PC-3 (cell line): ENCODE measurements at regions of chr2 and their contacts with region 1.

Region 1: DNA sequence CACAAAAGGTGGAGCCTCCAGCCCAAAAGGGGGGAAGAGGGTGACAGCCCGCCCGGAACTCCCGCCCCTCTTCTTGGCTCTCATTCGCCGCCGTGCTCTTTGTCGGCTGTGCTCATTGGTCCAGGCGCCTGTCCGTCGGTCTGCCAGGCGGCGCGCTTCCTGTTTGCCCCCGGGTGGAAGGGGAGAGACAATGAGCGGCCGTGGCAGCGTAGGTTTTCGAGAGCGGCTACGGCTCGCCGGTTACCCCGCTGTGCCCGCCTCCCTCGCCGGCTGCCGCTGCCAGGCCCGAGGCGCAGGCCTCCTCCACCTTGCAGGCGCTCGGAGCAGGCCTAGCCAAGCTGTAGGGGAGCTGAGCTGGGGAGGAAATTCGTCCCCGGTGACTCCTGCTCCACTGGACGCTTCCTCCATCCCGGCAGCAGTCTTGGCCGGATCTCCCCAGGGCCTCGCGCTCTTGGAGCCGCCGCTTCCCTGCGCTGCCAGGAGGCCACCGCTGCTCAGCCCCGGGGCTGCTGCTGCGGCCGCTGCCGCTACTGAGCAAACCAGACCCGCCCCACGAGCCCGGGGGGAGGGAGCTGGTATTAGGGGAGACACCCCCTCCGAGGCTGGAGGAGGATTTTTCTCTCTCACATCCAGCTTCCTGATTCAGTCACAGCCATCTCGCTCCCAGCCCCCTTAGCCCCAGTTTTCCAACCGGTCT is at the start of gene SP3:
- DNase-seq: peak; percentile 96
- ATAC-seq: peak; percentile 74
- H3K4me3 ChIP-seq: peak within 1 kb of the TSS; percentile 82
- H3K27ac ChIP-seq: peak within 1 kb of the TSS; percentile 95
- H3K4me1 ChIP-seq: peaks cover 25% of the 10 kb centered on the region
- H3K27me3 ChIP-seq: no peaks in the 10 kb centered on the region
- CTCF ChIP-seq: no peak
- total RNA-seq, gene SP3: 82.2 and 117 TPM in 2 replicates

Region 2: DNA sequence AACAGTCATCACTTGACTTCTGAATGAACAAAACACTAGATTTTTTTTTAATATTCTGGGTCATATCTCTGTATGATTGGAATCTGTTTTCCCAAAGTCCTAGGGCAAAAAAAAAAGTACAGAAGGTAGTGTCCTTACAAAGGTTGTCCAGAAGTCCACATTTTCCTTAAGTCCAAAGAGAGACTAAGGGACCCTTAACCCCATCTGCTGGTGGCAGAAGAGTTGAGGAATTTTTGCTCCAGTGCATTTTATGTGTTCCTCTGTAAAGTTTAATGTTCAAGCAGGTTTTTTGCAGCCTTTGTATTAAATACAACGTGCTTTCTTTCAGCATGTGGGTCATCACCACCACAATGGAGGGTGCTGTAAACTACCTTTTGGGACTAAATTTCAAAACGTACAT is 216.2 kb before region 1 on chr2:
- CTCF ChIA-PET with region 1: no interaction called
- POLR2A ChIA-PET with region 1: no interaction called
- intact Hi-C with region 1: loop called (anchors 5 kb)
- DNase-seq: peak; percentile 74
- ATAC-seq: peak; percentile 64
- H3K4me3 ChIP-seq: no peak overlapping the region
- H3K27ac ChIP-seq: no peak overlapping the region
- H3K4me1 ChIP-seq: no peaks in the 10 kb centered on the region
- H3K27me3 ChIP-seq: no peaks in the 10 kb centered on the region
- CTCF ChIP-seq: peak; percentile 74

Region 3: GRCh38 chr2:173909846-173910245 is 55.6 kb before region 1 on chr2:
- CTCF ChIA-PET with region 1: no interaction called
- POLR2A ChIA-PET with region 1: no interaction called
- intact Hi-C with region 1: loop called (anchors 2 kb)
- DNase-seq: peak; percentile 44
- ATAC-seq: peak; percentile 31
- H3K4me3 ChIP-seq: no peak overlapping the region
- H3K27ac ChIP-seq: no peak overlapping the region
- H3K4me1 ChIP-seq: peaks cover 14% of the 10 kb centered on the region
- H3K27me3 ChIP-seq: no peaks in the 10 kb centered on the region
- CTCF ChIP-seq: no peak

Region 4: DNA sequence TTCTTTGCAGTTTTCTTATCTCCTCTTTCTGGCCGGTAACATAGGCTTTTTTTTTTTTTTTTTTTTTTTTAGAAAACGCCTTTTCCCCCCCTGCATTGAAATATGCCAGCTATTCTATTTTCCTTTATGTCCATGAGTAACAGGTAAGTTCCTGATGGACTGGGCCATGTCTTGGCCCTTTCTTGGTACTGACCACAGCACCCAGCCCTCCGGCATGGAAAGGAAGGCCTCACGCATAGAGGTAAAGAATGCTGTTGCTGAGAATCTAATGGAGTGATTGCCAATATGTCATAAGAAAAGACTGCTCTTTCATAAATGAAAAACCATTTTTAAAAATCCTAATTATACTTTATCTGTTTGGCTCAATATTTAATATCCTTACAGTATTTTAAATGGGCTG is 63.0 kb after region 1 on chr2:
- CTCF ChIA-PET with region 1: no interaction called
- POLR2A ChIA-PET with region 1: no interaction called
- intact Hi-C with region 1: no loop called
- DNase-seq: no peak
- ATAC-seq: no peak
- H3K4me3 ChIP-seq: no peak overlapping the region
- H3K27ac ChIP-seq: no peak overlapping the region
- H3K4me1 ChIP-seq: peaks cover 33% of the 10 kb centered on the region
- H3K27me3 ChIP-seq: no peaks in the 10 kb centered on the region
- CTCF ChIP-seq: no peak

Region 5: DNA sequence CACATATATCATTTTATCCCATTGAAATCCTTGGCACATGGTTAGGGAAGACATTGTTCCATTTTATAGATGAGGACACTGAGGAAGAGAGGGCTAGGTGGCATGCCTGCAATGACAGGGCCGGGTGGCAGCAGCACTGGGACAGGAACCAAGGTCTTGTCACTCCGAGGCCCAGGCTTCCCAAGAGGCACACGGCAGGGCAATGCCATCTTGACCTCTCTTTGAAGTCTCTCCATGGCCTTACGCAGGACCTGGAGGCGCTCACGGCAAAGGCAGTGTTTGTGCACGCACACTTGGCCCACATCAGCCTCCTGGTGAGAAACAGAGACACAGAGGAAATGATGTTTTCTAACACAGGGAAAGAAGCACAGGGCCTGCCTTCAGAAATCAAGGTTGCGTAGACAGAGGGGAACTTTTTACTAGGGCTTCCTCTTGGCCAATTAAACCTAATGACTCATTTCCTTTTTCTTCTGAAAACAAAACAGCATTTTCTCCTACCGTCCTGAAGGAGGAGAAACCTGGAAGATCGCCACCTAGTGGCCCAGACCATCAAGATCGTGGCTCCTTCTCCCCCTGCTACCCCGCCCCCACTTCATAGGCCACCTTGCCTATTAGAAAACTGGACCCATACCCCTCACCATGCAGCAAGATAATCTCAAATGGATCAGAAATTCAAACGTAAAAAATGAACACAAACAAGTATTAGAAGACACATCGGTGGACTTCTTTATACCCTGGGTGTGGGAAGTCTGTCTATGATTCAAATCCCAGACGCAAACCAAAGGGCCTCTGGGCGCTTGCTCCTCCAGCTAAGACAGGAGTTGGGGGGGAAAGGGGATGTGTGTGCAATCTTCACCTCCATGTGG is 74.3 kb after region 1 on chr2:
- CTCF ChIA-PET with region 1: no interaction called
- POLR2A ChIA-PET with region 1: no interaction called
- intact Hi-C with region 1: loop called (anchors 2 kb)
- DNase-seq: peak; percentile 97
- ATAC-seq: peak; percentile 85
- H3K4me3 ChIP-seq: peak overlapping the region; percentile 4; the same call in 1 of the 2 replicates
- H3K27ac ChIP-seq: peak overlapping the region; percentile 91
- H3K4me1 ChIP-seq: peaks cover 24% of the 10 kb centered on the region
- H3K27me3 ChIP-seq: no peaks in the 10 kb centered on the region
- CTCF ChIP-seq: peak; percentile 91

Region 6: DNA sequence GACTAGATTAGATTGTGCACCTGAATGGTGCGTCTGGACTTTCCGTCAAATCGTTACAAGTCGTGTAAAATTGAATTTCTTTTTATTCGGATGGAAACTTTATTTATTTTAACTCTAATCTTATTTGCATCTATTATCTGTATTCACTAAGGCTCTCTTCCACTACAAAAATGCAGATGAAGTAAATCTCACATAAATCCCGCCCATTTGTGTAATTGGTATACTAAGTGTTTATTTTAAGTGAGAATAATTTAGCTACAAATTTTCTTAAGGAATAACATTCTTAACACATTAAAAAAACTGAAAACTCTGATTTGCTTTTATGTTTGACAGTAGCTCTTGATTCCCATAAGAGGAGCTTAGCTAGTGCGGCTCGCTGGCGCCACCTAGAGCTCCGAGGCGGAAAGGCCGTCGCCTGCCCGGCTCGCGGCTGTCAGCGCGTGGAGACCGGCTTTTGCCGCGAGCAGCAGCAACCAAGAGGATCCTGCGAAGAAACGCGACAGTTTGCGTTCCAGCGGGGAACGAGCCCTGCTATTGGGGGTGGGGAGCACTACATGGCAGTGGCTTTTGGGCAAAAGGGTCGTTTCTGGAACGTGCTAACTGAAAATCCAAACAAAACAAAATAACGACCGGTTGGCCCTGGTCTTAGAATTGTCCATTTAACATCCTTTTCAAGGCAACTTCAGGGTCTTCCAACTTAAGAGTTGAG is 376.0 kb after region 1 on chr2:
- CTCF ChIA-PET with region 1: no interaction called
- POLR2A ChIA-PET with region 1: interaction called, 3 read pairs
- intact Hi-C with region 1: loop called (anchors 2 kb)
- DNase-seq: peak; percentile 93
- ATAC-seq: peak; percentile 68
- H3K4me3 ChIP-seq: peak overlapping the region; percentile 62
- H3K27ac ChIP-seq: peak overlapping the region; percentile 21
- H3K4me1 ChIP-seq: peaks cover 23% of the 10 kb centered on the region
- H3K27me3 ChIP-seq: no peaks in the 10 kb centered on the region
- CTCF ChIP-seq: peak; percentile 98